Dendritic cell treated with granulocyte-macrophage colony-stimulating factor and Interleukin-4, amounts not matched to agents 40 ng/mL and 50 ng/mL, for 4 days (primary cell): ENCODE measurements at regions of chr3 and their contacts with region 1.

Region 1: DNA sequence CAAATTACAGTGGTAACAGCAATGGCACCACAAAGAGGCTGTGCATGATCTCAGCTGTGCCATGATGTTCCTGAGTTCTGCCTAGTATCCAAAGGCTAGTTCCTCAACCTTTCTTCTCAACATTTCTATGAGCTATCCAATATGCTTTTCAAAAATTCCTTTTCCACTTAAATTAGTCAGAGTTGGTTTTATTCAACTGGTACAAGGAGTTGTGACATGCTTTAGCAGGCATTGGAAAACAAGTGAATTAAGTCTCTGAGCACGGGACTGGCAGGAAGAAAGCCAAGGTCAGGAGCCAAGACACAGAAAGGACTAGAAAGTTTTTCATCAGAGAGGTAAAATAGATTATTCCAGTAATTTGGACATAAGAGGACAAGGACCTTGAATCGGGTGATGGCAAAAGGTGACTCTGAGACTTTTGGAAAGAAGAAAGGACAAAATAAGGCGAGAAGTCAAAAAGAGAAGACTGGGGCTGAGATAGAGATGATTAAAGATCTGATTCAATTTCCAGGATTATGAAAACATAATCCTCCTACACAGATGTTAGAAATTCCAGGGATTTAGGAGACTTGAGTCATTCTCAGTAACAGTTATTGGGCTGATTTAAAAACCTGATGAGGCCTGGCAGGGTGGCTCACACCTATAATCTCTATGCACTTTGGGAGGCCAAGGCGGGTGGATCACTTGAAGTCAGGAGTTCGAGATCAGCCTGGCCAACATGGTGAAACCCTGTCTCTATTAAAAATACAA is 36.1 kb downstream of the PBRM1 start:
- H3K4me3 Mint-ChIP-seq: no peak overlapping the region
- H3K27ac Mint-ChIP-seq: no peak overlapping the region
- H3K4me1 Mint-ChIP-seq: no peaks in the 10 kb centered on the region
- H3K27me3 Mint-ChIP-seq: no peaks in the 10 kb centered on the region

Region 2: DNA sequence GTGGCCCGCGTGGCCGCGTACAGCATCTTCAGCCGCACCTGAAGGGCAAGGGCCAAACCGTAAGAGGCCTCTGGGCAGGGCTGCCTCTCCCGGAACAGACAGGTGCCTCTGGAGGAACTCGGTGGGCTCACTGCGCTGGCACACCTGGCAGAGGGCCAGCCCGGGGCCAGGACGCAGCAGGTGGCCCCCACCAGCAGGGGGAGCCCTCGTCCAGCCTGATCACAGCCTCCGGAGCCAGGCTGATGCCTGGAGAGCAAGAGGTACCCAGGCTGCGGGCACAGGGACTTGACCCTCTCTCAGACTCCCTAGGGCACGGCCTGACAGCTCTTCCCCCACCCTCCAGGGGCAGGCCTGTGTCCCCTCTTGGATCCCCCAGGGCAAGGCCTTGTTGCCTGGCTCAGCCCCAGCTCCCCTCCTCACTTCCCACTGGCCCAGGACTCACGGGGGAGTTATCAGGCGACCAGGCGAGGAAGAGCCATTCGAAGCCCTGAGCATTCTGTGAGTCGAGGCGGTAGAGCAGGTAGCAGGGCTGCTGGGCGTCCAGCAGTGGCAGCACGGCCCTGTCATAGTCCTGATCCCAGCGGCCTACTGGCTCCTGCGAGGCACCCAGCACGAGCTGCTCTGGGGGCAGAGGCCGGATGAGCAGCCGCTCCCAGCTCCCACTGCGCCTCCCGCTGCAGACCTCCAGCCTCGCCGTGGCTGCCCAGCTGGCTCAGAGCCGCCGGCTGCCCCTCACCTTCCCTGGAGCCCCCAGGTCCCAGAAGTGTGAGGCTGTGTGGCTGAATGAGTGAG is 417.9 kb before region 1 on chr3:
- intact Hi-C with region 1: no loop called
- H3K4me3 Mint-ChIP-seq: no peak overlapping the region
- H3K27ac Mint-ChIP-seq: peak overlapping the region; percentile 3
- H3K4me1 Mint-ChIP-seq: peaks cover 73% of the 10 kb centered on the region
- H3K27me3 Mint-ChIP-seq: no peaks in the 10 kb centered on the region

Region 3: GRCh38 chr3:52471371-52472238 is 178.0 kb before region 1 on chr3:
- intact Hi-C with region 1: no loop called
- H3K4me3 Mint-ChIP-seq: peak overlapping the region; percentile 26
- H3K27ac Mint-ChIP-seq: peak overlapping the region; percentile 85
- H3K4me1 Mint-ChIP-seq: peaks cover 69% of the 10 kb centered on the region
- H3K27me3 Mint-ChIP-seq: no peaks in the 10 kb centered on the region

Region 4: DNA sequence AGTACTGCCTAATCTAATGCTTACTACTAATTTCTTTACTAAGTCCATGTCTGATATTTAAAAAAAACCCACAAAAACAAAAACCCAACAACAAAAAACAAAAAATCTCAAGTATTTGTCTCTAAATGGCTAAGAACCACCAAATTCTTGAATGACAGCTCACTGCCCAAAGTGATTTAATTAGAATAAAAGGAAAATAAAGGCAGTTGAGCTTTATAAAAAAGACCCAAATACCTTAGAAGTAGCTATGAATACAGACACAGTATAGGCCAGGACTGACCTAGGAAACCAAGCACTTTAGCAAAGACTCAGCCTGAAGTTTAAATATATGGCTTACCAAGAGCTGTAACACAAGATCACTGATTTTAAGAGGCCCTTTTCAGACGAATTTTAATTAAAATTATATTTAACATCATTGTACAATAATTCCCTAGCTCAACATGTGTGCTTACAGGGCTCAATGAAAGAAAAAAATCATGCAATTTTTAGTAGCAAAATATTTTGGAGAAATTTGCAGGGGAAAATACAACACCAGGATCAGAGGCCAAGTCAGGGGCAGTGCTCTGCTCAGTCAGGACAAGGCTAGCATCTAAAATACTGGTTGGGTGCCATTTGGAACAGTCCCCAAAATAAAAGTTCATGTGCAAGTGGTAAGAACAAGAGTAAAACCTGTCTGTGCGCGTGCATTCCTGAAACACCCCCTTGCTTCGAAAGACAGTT is 88.4 kb before region 1 on chr3:
- intact Hi-C with region 1: loop called (anchors 5 kb)
- H3K4me3 Mint-ChIP-seq: no peak overlapping the region
- H3K27ac Mint-ChIP-seq: no peak overlapping the region
- H3K4me1 Mint-ChIP-seq: no peaks in the 10 kb centered on the region
- H3K27me3 Mint-ChIP-seq: no peaks in the 10 kb centered on the region